MCF 10A (cell line): ENCODE measurements at regions of chr16 and their contacts with region 1.

Region 1: GRCh38 chr16:30429678-30430427 is at the start of gene DCTPP1:
- DNase-seq: peak; percentile 100
- H3K4me3 Mint-ChIP-seq: no peak within 1 kb of the TSS
- H3K27ac Mint-ChIP-seq: no peak within 1 kb of the TSS
- H3K4me1 Mint-ChIP-seq: peaks cover 15% of the 10 kb centered on the region
- H3K27me3 Mint-ChIP-seq: no peaks in the 10 kb centered on the region
- CTCF ChIP-seq: peak; percentile 71
- total RNA-seq, gene DCTPP1: 29.1 and 42.4 TPM in 2 replicates

Region 2: GRCh38 chr16:30407102-30407803 is 22.6 kb before region 1 on chr16 and contains the start of gene ZNF771:
- CTCF ChIA-PET with region 1: interaction called, 8 read pairs
- POLR2A ChIA-PET with region 1: interaction called, 10 read pairs
- intact Hi-C with region 1: no loop called
- DNase-seq: peak; percentile 93
- H3K4me3 Mint-ChIP-seq: peak within 1 kb of the TSS; percentile 81
- H3K27ac Mint-ChIP-seq: peak within 1 kb of the TSS; percentile 33
- H3K4me1 Mint-ChIP-seq: peaks cover 19% of the 10 kb centered on the region
- H3K27me3 Mint-ChIP-seq: peaks cover 11% of the 10 kb centered on the region
- CTCF ChIP-seq: no peak
- total RNA-seq, gene ZNF771: 8.1 and 8.3 TPM in 2 replicates

Region 3: DNA sequence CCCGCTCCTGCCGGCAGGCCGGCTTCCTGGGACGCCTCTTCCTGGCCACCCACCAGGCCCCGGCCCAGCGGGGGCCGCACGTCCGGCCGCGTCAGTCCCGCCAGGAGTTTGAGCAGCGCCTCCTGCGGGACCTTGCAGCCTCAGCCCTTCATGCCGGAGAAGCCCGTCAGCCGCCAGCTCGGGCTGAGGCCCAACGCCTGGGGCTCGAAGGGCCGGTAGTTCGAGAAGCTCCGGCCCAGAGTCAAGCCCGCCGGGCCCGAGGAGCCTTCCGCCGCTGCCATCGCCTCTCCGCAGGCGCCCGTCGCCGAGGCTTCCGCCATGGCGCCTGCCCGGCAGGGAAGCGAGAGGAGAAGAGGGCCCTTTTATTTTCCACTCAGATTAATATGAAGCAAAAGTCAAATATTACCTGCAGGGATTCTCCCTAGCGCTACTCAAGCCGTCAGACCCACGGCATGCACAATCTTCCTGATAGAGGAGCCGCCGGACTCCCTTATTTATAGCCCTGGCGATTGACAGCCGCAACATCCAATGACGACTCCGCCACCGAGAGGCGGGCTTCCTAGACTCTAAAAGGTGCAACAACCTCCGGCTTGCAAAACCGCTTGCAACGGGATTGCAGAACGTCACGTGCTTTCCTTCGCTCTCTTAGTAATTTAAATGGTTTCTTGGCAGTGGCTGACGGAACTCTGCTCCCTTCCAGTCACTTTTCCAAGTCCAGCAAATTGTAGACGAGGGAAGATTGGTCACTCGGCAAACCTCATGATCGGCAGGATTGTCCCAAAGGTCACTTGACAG is 15.8 kb after region 1 on chr16 and contains the start of gene SEPHS2:
- CTCF ChIA-PET with region 1: interaction called, 12 read pairs
- POLR2A ChIA-PET with region 1: interaction called, 13 read pairs
- intact Hi-C with region 1: no loop called
- DNase-seq: peak; percentile 99
- H3K4me3 Mint-ChIP-seq: peak within 1 kb of the TSS; percentile 80
- H3K27ac Mint-ChIP-seq: peak within 1 kb of the TSS; percentile 90
- H3K4me1 Mint-ChIP-seq: peaks cover 17% of the 10 kb centered on the region
- H3K27me3 Mint-ChIP-seq: no peaks in the 10 kb centered on the region
- CTCF ChIP-seq: peak; percentile 11
- total RNA-seq, gene SEPHS2: 51.9 and 73.3 TPM in 2 replicates

Region 4: GRCh38 chr16:30526823-30527635 is 97.2 kb after region 1 on chr16:
- CTCF ChIA-PET with region 1: interaction called, 5 read pairs
- POLR2A ChIA-PET with region 1: interaction called, 22 read pairs
- intact Hi-C with region 1: loop called (anchors 5 kb)
- DNase-seq: peak; percentile 99
- H3K4me3 Mint-ChIP-seq: peak overlapping the region; percentile 81
- H3K27ac Mint-ChIP-seq: peak overlapping the region; percentile 88
- H3K4me1 Mint-ChIP-seq: peaks cover 21% of the 10 kb centered on the region
- H3K27me3 Mint-ChIP-seq: no peaks in the 10 kb centered on the region
- CTCF ChIP-seq: peak; percentile 18

Region 5: DNA sequence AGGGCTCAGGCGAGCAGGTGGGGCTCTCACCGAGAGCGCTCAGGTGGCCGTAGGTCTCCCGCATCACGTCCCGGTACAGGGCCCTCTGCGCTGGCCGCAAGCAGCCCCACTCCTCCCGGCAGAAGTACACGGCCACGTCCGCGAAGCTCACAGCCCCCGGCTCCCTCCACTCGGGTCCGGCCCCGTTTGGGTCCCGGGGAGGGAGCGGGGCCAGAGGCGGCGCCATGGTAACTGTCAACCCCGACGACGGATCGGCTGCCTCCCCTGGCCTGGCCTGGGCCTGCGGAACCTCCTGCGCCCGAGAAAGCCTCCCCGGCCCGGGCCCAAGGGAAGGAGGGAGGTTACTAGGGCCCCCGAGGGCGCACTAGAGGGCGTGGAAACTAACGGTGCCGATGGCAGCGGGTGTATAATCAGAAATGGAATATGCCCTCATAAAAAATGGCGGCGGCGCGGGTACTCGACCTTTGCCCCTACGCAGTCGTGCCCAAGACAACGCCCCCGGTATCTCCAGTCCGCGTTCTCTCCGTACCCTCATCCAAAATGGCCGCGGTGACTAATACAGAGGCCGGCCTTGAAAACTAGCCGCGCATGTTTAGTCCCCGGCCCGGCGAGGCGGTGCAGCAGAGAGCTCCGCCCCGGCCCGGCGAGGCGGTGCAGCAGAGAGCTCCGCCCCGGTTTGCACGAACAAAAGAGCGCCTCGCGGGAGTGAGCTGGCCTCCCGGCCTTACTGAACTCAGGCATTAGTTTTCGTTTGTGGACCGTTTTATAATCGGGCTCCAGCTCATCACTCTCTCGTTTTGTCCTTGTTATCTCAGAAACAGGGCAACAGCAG is 128.3 kb after region 1 on chr16 and contains the start of gene ZNF764:
- CTCF ChIA-PET with region 1: interaction called, 15 read pairs
- POLR2A ChIA-PET with region 1: interaction called, 19 read pairs
- intact Hi-C with region 1: no loop called
- DNase-seq: peak; percentile 99
- H3K4me3 Mint-ChIP-seq: peak within 1 kb of the TSS; percentile 77
- H3K27ac Mint-ChIP-seq: peak within 1 kb of the TSS; percentile 79
- H3K4me1 Mint-ChIP-seq: peaks cover 5% of the 10 kb centered on the region
- H3K27me3 Mint-ChIP-seq: no peaks in the 10 kb centered on the region
- CTCF ChIP-seq: no peak
- total RNA-seq, gene ZNF764: 8.3 and 10.6 TPM in 2 replicates

Region 6: GRCh38 chr16:30585400-30586189 is 155.7 kb after region 1 on chr16 and contains the start of gene ZNF785:
- CTCF ChIA-PET with region 1: interaction called, 4 read pairs
- POLR2A ChIA-PET with region 1: interaction called, 10 read pairs
- intact Hi-C with region 1: no loop called
- DNase-seq: peak; percentile 100
- H3K4me3 Mint-ChIP-seq: peak within 1 kb of the TSS; percentile 96
- H3K27ac Mint-ChIP-seq: peak within 1 kb of the TSS; percentile 78
- H3K4me1 Mint-ChIP-seq: no peaks in the 10 kb centered on the region
- H3K27me3 Mint-ChIP-seq: no peaks in the 10 kb centered on the region
- CTCF ChIP-seq: no peak
- total RNA-seq, gene ZNF785: 12.8 and 16.3 TPM in 2 replicates

Region 7: DNA sequence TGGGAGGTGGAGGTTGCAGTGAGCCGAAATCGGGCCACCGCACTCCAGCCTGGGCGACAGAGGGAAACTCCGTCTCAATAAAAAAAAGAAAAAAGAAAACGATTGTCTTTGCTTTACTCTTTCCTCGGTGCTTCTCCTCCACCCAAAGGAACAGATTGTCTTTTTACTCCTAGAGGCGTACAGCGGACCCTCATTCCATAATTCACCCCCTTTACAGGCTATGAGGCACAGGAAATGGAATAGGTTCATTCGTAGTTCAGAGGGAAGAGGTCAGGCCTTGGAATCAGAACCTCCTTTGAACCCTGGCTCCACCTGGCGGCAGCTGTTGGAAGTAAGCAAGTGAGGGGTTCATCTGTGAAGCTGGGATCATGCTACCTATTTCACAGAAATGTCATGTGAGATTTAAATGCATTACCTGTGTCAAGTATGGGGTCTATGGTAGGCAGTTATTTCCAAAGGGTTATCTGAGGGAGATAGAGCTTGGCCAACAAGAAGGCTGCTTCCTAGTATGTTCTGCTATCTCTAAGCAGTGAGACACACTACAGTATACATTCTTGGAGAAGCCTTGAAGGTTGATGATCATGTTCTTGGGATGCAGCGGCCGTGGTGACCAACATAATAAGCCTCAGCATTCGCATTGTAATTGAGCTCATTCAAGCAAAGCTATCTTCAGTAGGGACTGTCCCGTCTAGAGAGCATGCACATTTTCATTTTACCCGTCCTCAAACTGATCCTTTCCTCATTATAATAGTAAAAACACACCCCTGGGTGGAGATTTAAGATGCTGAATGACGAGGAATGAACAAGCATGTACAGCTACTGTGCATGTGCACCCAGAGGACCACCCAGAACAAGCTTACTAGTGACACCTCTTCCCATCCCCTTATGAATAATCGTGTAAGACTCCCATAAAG is 199.0 kb after region 1 on chr16:
- CTCF ChIA-PET with region 1: interaction called, 31 read pairs
- POLR2A ChIA-PET with region 1: interaction called, 10 read pairs
- intact Hi-C with region 1: loop called (anchors 1 kb)
- DNase-seq: peak; percentile 87
- H3K4me3 Mint-ChIP-seq: no peak overlapping the region
- H3K27ac Mint-ChIP-seq: no peak overlapping the region
- H3K4me1 Mint-ChIP-seq: peaks cover 6% of the 10 kb centered on the region
- H3K27me3 Mint-ChIP-seq: no peaks in the 10 kb centered on the region
- CTCF ChIP-seq: peak; percentile 84